Dorsolateral prefrontal cortex (tissue), 120 donors: ENCODE measurements at regions of chr11 and their contacts with region 1.

Region 1: DNA sequence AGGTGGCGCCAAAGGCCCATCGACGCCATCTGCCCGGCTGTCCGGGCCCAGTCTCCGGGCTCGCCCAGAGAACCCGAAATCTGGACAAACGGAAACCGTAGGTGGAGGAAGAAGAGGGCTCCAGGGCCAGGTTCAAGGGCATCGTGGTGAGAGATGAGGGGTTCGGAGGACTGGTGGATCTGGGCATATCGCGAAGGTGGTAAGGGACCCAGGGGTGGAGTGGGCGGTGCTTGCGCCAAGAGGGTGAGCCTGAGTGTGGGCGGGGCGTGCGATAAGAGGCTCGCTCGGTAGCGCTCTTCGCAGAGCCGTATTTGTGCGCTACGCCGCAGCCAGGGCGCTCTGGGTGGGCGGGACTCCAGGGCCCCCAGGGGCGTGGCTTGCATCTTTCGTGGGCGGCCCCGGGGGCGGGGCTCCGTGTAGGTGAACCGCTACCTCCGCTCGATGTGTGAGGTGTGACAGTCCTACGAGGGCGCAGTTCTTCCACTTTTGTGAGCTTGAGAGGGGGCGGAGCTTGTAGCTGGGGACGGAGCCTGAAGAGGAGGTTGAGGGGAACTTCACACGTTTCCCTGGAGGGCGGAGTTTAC is 4.8 kb downstream of the CD248 start:
- DNase-seq: peak; percentile 68 to 94 (median 88)
- H3K4me3 ChIP-seq: peak overlapping the region; percentile 40 to 84 (median 67)
- H3K27ac ChIP-seq: peak overlapping the region; percentile 26 to 95 (median 86)
- H3K27me3 ChIP-seq: no peaks in the 10 kb centered on the region
- CTCF ChIP-seq: peak in 53 of 56 donors; percentile 4 to 96 (median 85)

Region 2: GRCh38 chr11:66328307-66329144 is 16.5 kb after region 1 on chr11:
- intact Hi-C with region 1: loop called (anchors 1 to 2 kb)
- DNase-seq: peak; percentile 70 to 90 (median 76)
- H3K4me3 ChIP-seq: peak overlapping the region in 42 of 59 donors; percentile 6 to 54 (median 28)
- H3K27ac ChIP-seq: peak overlapping the region in 23 of 59 donors; percentile 1 to 77 (median 32)
- H3K27me3 ChIP-seq: no peaks in the 10 kb centered on the region
- CTCF ChIP-seq: peak; percentile 88 to 98 (median 97)

Region 3: DNA sequence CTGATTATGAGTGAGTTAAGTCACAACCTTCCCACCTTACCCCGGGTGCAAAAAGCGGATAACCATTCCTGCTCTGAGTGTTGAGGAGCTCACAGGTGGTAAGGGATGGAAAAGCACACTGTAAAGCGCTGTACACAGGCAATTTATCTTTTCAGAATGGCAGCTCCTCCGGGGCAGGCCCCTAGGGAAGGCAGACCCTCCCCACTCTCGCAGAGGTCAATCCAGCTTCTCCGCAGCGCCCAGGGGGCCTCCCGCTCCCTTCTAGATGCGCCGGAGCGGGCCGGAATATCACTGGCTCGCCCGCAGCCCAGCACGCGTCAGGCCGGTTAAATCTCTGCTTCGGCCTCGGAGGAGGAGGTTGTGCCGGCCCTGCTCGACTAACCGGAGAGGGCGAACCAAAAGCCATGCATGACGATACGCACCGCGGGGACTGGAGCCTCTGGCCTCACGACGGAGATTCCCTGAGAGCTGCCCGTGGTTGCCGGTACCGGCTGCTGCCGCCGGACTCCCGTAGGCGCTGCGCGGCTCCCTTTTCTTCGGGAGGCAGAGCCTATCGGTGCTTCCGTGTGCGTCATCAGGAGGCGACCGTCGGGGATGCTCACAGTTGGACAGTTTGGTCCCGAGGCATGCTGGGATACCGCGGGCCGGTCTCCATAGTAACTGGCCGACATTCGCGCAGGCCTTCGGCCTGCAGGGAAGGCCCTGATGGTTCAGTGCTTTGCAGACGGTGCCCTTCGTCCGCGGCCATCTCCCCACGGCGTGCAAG is 32.7 kb after region 1 on chr11 and contains the start of gene BRMS1:
- intact Hi-C with region 1: loop called in 1 of 2 experiments (anchors 5 kb)
- DNase-seq: peak; percentile 97 to 100 (median 99)
- H3K4me3 ChIP-seq: peak within 1 kb of the TSS; percentile 59 to 100 (median 94)
- H3K27ac ChIP-seq: peak within 1 kb of the TSS in 58 of 59 donors; percentile 8 to 98 (median 80)
- H3K27me3 ChIP-seq: no peaks in the 10 kb centered on the region
- CTCF ChIP-seq: peak in 53 of 56 donors; percentile 13 to 70 (median 49)
- total RNA-seq, gene BRMS1: 10.3 to 25.1 (median 16.2) TPM